H1 (cell line): ENCODE measurements at regions of chr1 and their contacts with region 1.

Region 1: DNA sequence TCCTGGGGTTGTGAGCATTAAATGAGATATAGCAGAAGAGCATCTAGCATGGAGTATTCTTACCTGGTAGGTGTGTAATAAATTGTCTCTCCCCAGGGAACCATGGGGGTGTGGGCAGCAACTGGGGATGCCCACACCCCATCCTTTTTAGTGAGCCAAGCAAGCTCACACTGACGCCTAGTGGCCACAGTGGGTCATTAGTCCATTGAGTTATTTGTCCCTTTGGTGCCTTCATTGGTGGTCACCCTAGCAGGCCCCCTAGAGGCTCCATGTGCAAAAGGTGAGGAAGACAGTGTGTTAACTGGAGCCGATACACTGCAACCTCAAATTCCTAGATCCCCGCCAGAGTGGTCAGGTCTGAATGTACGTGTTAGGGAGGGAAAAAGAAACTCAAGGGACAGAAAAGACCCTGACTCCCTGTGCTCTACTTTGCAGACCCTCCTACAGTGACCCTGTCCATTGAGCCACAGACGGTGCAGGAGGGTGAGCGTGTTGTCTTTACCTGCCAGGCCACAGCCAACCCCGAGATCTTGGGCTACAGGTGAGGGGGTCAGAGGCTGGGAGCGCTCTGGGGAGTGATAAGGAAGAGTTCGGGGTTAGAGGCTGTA is 93.3 kb upstream of the CD1D start:
- DNase-seq: peak; percentile 63 to 84
- H3K4me3 ChIP-seq: no peak overlapping the region
- H3K27ac ChIP-seq: 0 out of 2 replicates have a peak overlapping the region, but pooled peaks have one; percentile 10
- H3K4me1 ChIP-seq: peaks cover 0 to 3% (median under 1%) of the 10 kb centered on the region in 4 experiments; a peak in 3 of 7 replicates
- H3K27me3 ChIP-seq: no peaks in the 10 kb centered on the region
- CTCF ChIP-seq: peak; percentile 83 to 100 (median 99)
- EP300 ChIP-seq: 0 out of 3 replicates have a peak, but pooled peaks of 1 of the 2 experiments have one; percentile 33
- POLR2A ChIP-seq: no peak
- RAD21 ChIP-seq: peak; percentile 95 to 97

Region 2: DNA sequence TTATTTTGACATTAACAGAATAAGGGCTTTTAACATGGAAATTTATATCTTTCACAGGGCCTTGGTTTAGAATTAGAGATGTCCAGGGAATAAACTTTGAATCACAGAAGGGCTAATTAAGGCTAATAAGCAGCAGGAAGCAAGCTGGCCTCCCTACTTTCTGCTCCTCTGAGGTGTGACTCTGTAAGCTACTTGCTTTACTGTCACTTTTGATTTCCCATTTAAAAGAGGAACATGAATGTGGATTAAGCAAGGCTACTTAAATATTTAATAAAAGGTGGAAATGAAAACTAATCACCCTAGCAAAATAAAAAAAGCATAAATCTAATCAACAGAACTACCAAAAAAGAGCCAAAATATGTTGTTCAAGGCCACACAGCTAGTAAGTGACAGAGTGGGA is 216.9 kb before region 1 on chr1:
- CTCF ChIA-PET with region 1: no interaction called
- POLR2A ChIA-PET with region 1: no interaction called
- DNase-seq: no peak
- H3K4me3 ChIP-seq: no peak overlapping the region
- H3K27ac ChIP-seq: no peak overlapping the region
- H3K4me1 ChIP-seq: peaks cover 0 to 12% (median under 1%) of the 10 kb centered on the region in 4 experiments; a peak in 3 of 7 replicates
- H3K27me3 ChIP-seq: no peaks in the 10 kb centered on the region
- CTCF ChIP-seq: no peak
- EP300 ChIP-seq: no peak
- POLR2A ChIP-seq: no peak
- RAD21 ChIP-seq: no peak

Region 3: DNA sequence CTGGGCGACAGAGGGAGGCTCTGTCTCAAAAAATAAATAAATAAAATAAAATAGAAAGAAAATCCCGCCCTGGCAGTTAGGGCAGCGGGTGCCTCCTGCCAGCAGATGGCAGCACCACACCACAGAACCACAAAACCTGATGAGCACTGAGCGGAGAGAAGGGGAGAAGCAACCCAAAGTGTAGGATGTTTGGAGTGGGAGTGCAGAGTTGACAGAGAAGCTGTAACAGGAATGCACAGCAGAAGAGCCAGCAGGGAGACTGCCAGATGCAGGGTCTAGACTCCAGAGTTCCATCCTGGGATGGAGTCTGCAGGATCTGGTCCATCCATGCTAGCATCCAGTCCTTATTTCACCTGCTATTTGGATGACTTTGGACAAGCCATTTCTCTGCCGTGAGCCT is 123.7 kb before region 1 on chr1:
- CTCF ChIA-PET with region 1: interaction called, 2,918 read pairs
- POLR2A ChIA-PET with region 1: no interaction called
- DNase-seq: peak; percentile 17 to 86
- H3K4me3 ChIP-seq: no peak overlapping the region
- H3K27ac ChIP-seq: no peak overlapping the region
- H3K4me1 ChIP-seq: peaks cover 0 to 8% (median 1%) of the 10 kb centered on the region in 4 experiments; a peak in 3 of 7 replicates
- H3K27me3 ChIP-seq: peaks cover 0 to 2% (median 0%) of the 10 kb centered on the region in 4 experiments; a peak in 1 of 7 replicates
- CTCF ChIP-seq: peak; percentile 75 to 95 (median 76)
- EP300 ChIP-seq: no peak
- POLR2A ChIP-seq: no peak
- RAD21 ChIP-seq: peak; percentile 96 to 97

Region 4: DNA sequence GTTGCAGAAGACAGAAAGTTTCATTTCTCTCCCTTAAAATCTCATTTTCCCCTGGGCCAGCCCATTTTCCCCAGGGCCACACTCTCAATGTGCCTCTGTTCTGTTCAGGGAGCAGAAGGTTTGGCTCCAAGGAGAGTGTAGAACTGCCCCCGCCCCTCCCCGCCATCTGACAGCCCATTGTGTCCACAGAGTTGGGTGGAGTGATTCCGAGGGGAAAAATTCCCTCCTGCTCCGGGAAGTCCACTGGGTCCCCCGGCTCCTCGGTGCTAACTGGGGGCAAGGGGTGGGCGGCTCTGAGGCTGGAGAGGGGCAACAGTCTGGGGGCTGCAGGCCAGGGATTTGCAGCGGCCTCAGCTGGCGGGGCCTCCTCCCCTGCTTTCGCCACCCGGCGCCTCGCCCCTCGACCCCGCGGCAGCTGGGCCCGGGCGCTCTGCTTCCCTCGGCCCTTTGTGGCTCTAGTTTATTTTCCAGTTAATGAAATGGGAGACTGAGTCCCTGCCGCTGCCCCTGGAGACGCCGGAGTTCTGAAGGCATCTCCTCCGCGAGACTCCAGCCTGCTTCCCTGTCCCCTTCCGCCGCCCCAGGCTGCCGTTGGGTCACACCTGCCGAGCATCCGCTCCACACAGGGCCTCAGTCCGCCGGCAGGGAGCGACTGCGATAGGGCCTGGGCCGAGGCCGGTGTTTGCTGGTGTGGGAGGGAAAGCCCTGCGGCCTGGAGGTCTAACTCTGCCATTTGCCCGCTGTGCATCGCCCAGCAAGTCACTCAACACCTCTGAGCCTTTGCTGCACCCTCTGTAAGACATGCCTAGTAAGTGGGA is 108.6 kb before region 1 on chr1:
- CTCF ChIA-PET with region 1: interaction called, 2,918 read pairs
- POLR2A ChIA-PET with region 1: no interaction called
- DNase-seq: peak in 1 of 2 experiments; percentile 83
- H3K4me3 ChIP-seq: peak overlapping the region in 2 of 4 experiments; percentile 2 to 41; a peak in 3 of 8 replicates
- H3K27ac ChIP-seq: no peak overlapping the region
- H3K4me1 ChIP-seq: peaks cover 1 to 9% (median 5%) of the 10 kb centered on the region in 4 experiments; a peak in 3 of 7 replicates
- H3K27me3 ChIP-seq: no peaks in the 10 kb centered on the region
- CTCF ChIP-seq: peak; percentile 23 to 39 (median 36); a peak in 3 of 4 replicates
- EP300 ChIP-seq: no peak
- POLR2A ChIP-seq: no peak
- RAD21 ChIP-seq: peak; percentile 22 to 40; a peak in 3 of 4 replicates

Region 5: GRCh38 chr1:157992031-157992832 is 95.2 kb before region 1 on chr1:
- CTCF ChIA-PET with region 1: interaction called, 2,918 read pairs
- POLR2A ChIA-PET with region 1: interaction called, 5 read pairs
- DNase-seq: peak in 1 of 2 experiments; percentile 86
- H3K4me3 ChIP-seq: peak overlapping the region in 1 of 4 experiments; percentile 99; a peak in 1 of 8 replicates
- H3K27ac ChIP-seq: no peak overlapping the region
- H3K4me1 ChIP-seq: peaks cover 16 to 32% (median 22%) of the 10 kb centered on the region in 4 experiments
- H3K27me3 ChIP-seq: peaks cover 0 to 5% (median 0%) of the 10 kb centered on the region in 4 experiments; a peak in 3 of 7 replicates
- CTCF ChIP-seq: peak; percentile 90 to 97 (median 95)
- EP300 ChIP-seq: no peak
- POLR2A ChIP-seq: no peak
- RAD21 ChIP-seq: peak; percentile 96 to 98

Region 6: DNA sequence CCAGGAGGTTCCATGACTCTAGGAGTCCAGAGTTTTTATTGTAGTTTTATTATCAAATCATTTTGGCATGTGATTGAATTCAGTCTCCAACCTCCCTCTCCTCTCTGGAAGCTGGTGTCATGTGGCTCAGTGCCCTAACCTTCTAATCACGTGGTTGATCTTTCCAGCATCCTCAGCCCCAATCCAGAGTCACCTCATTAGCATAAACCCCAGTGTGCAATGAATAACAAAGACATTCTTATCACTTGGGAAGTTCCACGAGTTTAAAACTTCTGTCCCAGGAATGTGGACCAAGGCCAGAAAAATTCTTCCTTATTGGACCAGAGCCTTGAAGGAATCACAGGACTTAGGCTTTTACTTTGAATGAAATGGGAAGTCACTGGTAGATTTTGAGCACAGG is 41.8 kb before region 1 on chr1:
- CTCF ChIA-PET with region 1: interaction called, 13 read pairs
- POLR2A ChIA-PET with region 1: no interaction called
- DNase-seq: peak in 1 of 2 experiments; percentile 17
- H3K4me3 ChIP-seq: no peak overlapping the region; a peak in 1 of 8 replicates
- H3K27ac ChIP-seq: no peak overlapping the region
- H3K4me1 ChIP-seq: peaks cover 2 to 19% (median 12%) of the 10 kb centered on the region in 4 experiments
- H3K27me3 ChIP-seq: no peaks in the 10 kb centered on the region
- CTCF ChIP-seq: no peak
- EP300 ChIP-seq: no peak
- POLR2A ChIP-seq: no peak
- RAD21 ChIP-seq: no peak

Region 7: GRCh38 chr1:158067662-158068061 is 19.8 kb before region 1 on chr1:
- CTCF ChIA-PET with region 1: interaction called, 12 read pairs
- POLR2A ChIA-PET with region 1: interaction called, 4 read pairs
- DNase-seq: no peak
- H3K4me3 ChIP-seq: no peak overlapping the region
- H3K27ac ChIP-seq: no peak overlapping the region
- H3K4me1 ChIP-seq: peaks cover 0 to 17% (median 6%) of the 10 kb centered on the region in 4 experiments; a peak in 5 of 7 replicates
- H3K27me3 ChIP-seq: no peaks in the 10 kb centered on the region
- CTCF ChIP-seq: no peak
- EP300 ChIP-seq: no peak
- POLR2A ChIP-seq: no peak
- RAD21 ChIP-seq: no peak

Region 8: GRCh38 chr1:158124999-158125398 is 37.6 kb after region 1 on chr1:
- CTCF ChIA-PET with region 1: interaction called, 1,033 read pairs
- POLR2A ChIA-PET with region 1: no interaction called
- DNase-seq: peak; percentile 89 to 91
- H3K4me3 ChIP-seq: no peak overlapping the region
- H3K27ac ChIP-seq: no peak overlapping the region
- H3K4me1 ChIP-seq: peaks cover 0 to 10% (median 7%) of the 10 kb centered on the region in 4 experiments; a peak in 5 of 7 replicates
- H3K27me3 ChIP-seq: no peaks in the 10 kb centered on the region
- CTCF ChIP-seq: peak; percentile 76 to 99 (median 97)
- EP300 ChIP-seq: 0 out of 3 replicates have a peak, but pooled peaks of 1 of the 2 experiments have one; percentile 26
- POLR2A ChIP-seq: no peak
- RAD21 ChIP-seq: peak; percentile 99 to 100

Region 9: GRCh38 chr1:158163000-158163947 is 75.8 kb after region 1 on chr1:
- CTCF ChIA-PET with region 1: no interaction called
- POLR2A ChIA-PET with region 1: no interaction called
- DNase-seq: no peak
- H3K4me3 ChIP-seq: no peak overlapping the region
- H3K27ac ChIP-seq: no peak overlapping the region
- H3K4me1 ChIP-seq: no peaks in the 10 kb centered on the region
- H3K27me3 ChIP-seq: no peaks in the 10 kb centered on the region; a peak in 1 of 7 replicates
- CTCF ChIP-seq: no peak
- EP300 ChIP-seq: no peak
- POLR2A ChIP-seq: no peak
- RAD21 ChIP-seq: no peak